Endothelial cell of umbilical vein (primary cell): ENCODE measurements at regions of chr12 and their contacts with region 1.

Region 1: DNA sequence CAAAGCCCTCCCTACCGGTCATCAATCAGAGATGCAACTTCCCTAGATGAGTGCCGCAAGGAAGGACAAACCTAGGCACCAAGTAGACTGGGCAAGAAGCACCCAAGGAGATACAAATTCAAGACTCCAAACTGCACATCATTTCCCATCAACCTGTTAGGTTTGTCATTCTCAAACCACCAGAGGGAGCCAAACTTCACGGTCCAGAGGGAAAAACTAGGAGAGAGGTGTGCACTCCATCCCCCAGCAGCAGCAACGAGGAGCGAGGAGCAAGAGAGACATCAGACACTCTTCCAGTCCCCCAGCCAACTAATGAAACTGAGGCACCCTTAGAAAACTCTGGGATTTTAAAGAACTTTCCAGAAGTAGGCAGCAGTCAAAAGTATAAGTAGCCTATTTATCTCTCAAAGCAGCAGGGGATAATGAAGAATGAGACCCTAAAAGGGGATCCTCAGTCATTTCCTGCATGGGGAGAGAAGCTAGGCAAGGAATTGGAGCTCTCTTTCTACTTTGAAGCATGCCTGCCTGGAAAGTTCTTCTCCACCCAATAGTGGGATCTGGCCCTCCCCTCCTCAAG is 37.0 kb upstream of the NT5DC3 start:
- DNase-seq: peak; percentile 52
- H3K4me3 ChIP-seq: no peak overlapping the region
- H3K27ac ChIP-seq: no peak overlapping the region
- H3K4me1 ChIP-seq: peaks cover 6% of the 10 kb centered on the region
- H3K27me3 ChIP-seq: no peaks in the 10 kb centered on the region
- CTCF ChIP-seq: peak; percentile 77 to 79
- POLR2A ChIP-seq: no peak

Region 2: DNA sequence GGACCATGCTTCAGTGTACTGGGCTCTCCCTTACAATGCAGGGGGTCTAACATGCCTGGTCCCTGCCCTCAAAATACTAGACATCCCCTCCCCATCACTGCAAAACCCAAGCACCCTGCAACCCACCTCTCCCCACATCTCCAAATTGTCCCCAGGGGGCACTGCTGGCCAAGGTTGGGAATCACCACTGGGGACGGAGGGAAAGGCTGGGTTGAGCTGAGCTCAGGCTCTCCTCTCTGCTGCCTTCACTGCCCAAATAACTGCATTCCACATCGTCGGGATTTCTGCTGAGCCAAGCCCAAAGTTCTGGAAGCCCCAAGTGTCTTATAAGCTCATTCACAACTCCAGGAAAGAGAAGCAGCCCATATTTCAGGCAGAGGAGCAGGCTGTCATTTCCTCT is 106.6 kb before region 1 on chr12:
- CTCF ChIA-PET with region 1: interaction called, 12 read pairs
- POLR2A ChIA-PET with region 1: no interaction called
- dilution Hi-C with region 1: no loop called
- intact Hi-C with region 1: loop called (anchors 2 kb)
- DNase-seq: peak; percentile 46
- H3K4me3 ChIP-seq: no peak overlapping the region
- H3K27ac ChIP-seq: no peak overlapping the region
- H3K4me1 ChIP-seq: no peaks in the 10 kb centered on the region
- H3K27me3 ChIP-seq: no peaks in the 10 kb centered on the region
- CTCF ChIP-seq: peak; percentile 56 to 70
- POLR2A ChIP-seq: no peak

Region 3: GRCh38 chr12:103901518-103902173 is 23.6 kb after region 1 on chr12:
- CTCF ChIA-PET with region 1: no interaction called
- POLR2A ChIA-PET with region 1: no interaction called
- dilution Hi-C with region 1: no loop called
- intact Hi-C with region 1: no loop called
- DNase-seq: no peak
- H3K4me3 ChIP-seq: no peak overlapping the region
- H3K27ac ChIP-seq: no peak overlapping the region
- H3K4me1 ChIP-seq: no peaks in the 10 kb centered on the region
- H3K27me3 ChIP-seq: peaks cover 6 to 9% of the 10 kb centered on the region in 2 experiments
- CTCF ChIP-seq: no peak
- POLR2A ChIP-seq: no peak

Region 4: GRCh38 chr12:104057771-104058197 is 179.8 kb after region 1 on chr12:
- CTCF ChIA-PET with region 1: no interaction called
- POLR2A ChIA-PET with region 1: no interaction called
- dilution Hi-C with region 1: no loop called
- intact Hi-C with region 1: loop called (anchors 2 kb)
- DNase-seq: peak; percentile 53
- H3K4me3 ChIP-seq: no peak overlapping the region
- H3K27ac ChIP-seq: no peak overlapping the region
- H3K4me1 ChIP-seq: no peaks in the 10 kb centered on the region
- H3K27me3 ChIP-seq: peaks cover 10 to 19% of the 10 kb centered on the region in 2 experiments
- CTCF ChIP-seq: peak; percentile 58 to 62
- POLR2A ChIP-seq: no peak